CD8-positive, alpha-beta T cell (primary cell): ENCODE measurements at regions of chr5 and their contacts with region 1.

Region 1: DNA sequence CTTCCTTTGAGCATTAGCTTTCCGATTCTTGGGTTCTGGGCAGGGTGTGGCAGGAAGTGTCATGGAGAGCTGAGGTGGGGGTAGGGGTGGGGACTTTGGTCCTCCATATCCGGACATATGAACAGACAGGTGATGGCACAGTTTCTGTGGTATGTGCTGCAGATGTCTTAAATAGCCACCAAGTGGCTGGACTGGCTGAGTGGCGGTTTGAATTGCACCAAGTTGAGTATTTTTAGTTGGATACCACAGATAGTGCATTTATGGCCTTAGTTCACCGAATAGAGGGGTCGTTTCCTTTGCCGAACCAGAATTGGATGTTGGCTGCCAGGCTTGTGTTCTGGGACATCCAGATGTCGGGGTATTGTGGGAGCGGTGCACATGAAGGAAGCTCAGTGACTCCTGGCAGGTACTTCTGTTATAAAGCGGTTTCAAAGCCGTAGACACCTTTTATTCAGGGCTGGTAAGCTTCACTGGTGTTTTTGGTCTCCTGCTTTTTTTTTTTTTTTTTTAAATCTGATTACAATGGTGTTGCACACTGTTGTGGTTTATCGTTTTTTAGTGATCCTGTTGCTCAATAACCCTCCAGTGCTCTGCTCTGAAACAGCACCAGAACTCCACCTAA is 15.1 kb upstream of the TNFAIP8 start:
- DNase-seq: peak in 8 of 9 experiments; percentile 34 to 80 (median 65)
- ATAC-seq: peak; percentile 51
- H3K4me3 ChIP-seq: peak overlapping the region; percentile 18 to 41
- H3K4me3 Mint-ChIP-seq: peak overlapping the region; percentile 75
- H3K27ac ChIP-seq: peak overlapping the region; percentile 8 to 62
- H3K27ac Mint-ChIP-seq: peak overlapping the region; percentile 94
- H3K4me1 ChIP-seq: peaks cover 96% of the 10 kb centered on the region
- H3K4me1 Mint-ChIP-seq: peaks cover 94% of the 10 kb centered on the region
- H3K27me3 ChIP-seq: no peaks in the 10 kb centered on the region
- H3K27me3 Mint-ChIP-seq: no peaks in the 10 kb centered on the region
- CTCF ChIP-seq: no peak

Region 2: DNA sequence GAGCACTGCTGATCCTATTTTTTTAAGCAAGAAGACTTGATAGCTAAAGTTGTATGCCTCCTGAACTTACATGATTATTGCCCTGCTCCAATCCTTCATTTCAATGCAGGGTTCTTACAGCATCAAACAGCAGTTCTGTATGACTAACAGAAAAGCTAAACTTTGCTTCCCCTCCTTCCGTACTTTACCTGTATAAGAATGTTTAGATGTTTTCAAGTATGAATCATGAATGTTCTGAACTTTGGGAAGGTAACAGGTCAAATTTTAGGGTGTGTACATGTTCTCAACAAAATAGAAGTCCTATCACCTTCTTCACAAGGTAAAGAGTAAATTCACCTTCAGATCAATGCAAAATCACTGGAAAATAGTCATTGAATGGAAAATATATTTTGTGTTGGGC is 1793.5 kb before region 1 on chr5:
- CTCF ChIA-PET with region 1: no interaction called
- POLR2A ChIA-PET with region 1: no interaction called
- intact Hi-C with region 1: no loop called
- DNase-seq: no peak
- ATAC-seq: no peak
- H3K4me3 ChIP-seq: no peak overlapping the region
- H3K4me3 Mint-ChIP-seq: no peak overlapping the region
- H3K27ac ChIP-seq: no peak overlapping the region
- H3K27ac Mint-ChIP-seq: no peak overlapping the region
- H3K4me1 ChIP-seq: no peaks in the 10 kb centered on the region
- H3K4me1 Mint-ChIP-seq: no peaks in the 10 kb centered on the region
- H3K27me3 ChIP-seq: no peaks in the 10 kb centered on the region
- H3K27me3 Mint-ChIP-seq: no peaks in the 10 kb centered on the region
- CTCF ChIP-seq: no peak

Region 3: GRCh38 chr5:119274767-119275130 is 66.0 kb before region 1 on chr5:
- CTCF ChIA-PET with region 1: interaction called, 8 read pairs
- POLR2A ChIA-PET with region 1: interaction called, 14 read pairs
- intact Hi-C with region 1: loop called in 1 of 2 experiments (anchors 2 kb)
- DNase-seq: peak in 4 of 9 experiments; percentile 30 to 76 (median 46)
- ATAC-seq: peak; percentile 52
- H3K4me3 ChIP-seq: peak overlapping the region in 1 of 2 experiments; percentile 96
- H3K4me3 Mint-ChIP-seq: peak overlapping the region; percentile 100
- H3K27ac ChIP-seq: peak overlapping the region; percentile 20 to 89
- H3K27ac Mint-ChIP-seq: peak overlapping the region; percentile 97
- H3K4me1 ChIP-seq: peaks cover 85% of the 10 kb centered on the region
- H3K4me1 Mint-ChIP-seq: peaks cover 96% of the 10 kb centered on the region
- H3K27me3 ChIP-seq: no peaks in the 10 kb centered on the region
- H3K27me3 Mint-ChIP-seq: no peaks in the 10 kb centered on the region
- CTCF ChIP-seq: no peak

Region 4: DNA sequence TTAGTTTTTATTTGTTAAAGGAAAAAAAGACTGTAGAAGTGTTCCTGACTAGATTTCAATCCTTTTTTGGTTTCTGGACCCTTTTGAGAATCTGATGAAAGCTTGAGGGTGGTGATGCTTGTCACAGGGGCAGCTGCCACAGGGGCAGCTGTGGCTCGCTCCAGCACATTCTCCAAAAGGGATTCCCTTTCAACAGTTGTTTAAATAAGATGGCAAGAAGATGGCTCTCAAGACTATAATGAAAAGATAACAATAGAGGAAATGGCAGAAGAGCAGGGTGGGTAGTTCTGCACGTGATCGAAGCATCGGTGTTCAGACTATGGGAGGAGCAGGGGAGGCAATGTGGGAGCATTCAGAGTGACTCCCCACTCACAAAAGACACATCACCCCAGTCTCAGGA is 31.4 kb before region 1 on chr5:
- CTCF ChIA-PET with region 1: interaction called, 14 read pairs
- POLR2A ChIA-PET with region 1: interaction called, 32 read pairs
- intact Hi-C with region 1: loop called (anchors 2 to 5 kb)
- DNase-seq: peak in 1 of 9 experiments; percentile 57
- ATAC-seq: peak; percentile 25
- H3K4me3 ChIP-seq: no peak overlapping the region
- H3K4me3 Mint-ChIP-seq: peak overlapping the region; percentile 78
- H3K27ac ChIP-seq: peak overlapping the region; percentile 30 to 67
- H3K27ac Mint-ChIP-seq: peak overlapping the region; percentile 99
- H3K4me1 ChIP-seq: peaks cover 97% of the 10 kb centered on the region
- H3K4me1 Mint-ChIP-seq: peaks cover 96% of the 10 kb centered on the region
- H3K27me3 ChIP-seq: no peaks in the 10 kb centered on the region
- H3K27me3 Mint-ChIP-seq: no peaks in the 10 kb centered on the region
- CTCF ChIP-seq: no peak

Region 5: DNA sequence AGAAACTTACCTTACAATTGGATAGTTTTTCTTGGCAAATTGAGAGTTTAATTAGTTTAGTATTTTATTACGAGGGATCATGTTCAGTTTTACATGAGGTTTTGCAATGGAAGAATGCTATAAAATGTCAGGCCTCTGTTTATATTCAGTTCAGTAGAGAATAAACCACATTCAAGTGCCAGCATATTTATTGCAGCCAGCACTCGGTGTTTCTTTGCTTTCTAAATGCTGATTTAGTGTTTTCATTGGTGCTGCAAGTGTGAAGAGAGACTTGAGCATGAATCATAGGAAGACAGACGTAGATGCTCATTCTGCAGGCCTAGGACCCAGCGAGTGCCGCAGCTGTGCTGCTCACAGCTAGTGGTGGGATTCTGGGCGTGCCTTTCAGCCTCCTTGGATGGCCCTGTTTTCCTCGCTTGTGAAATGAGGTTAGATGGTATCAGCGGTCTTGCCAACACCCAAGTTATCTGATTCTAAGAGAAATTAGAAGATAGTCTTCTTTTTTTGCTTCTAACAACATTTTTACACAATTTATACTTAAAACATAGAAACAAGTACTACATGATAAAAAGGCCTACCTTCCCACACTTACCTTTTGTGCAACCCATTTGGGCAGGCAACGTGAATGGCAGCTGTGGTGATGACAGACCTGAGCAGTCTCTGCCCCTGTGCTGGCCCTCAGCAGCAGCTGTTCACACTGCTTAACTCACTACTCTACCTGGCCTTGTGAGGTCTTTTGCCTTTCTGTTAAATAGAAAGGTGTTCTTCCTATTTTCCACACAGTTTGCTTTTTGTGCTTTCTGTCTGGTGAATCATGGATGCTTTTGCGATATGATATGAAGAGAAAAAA is 11.7 kb before region 1 on chr5:
- CTCF ChIA-PET with region 1: interaction called, 3 read pairs
- POLR2A ChIA-PET with region 1: interaction called, 22 read pairs
- intact Hi-C with region 1: loop called in 1 of 2 experiments (anchors 1 kb)
- DNase-seq: peak in 8 of 9 experiments; percentile 34 to 88 (median 74)
- ATAC-seq: peak; percentile 70
- H3K4me3 ChIP-seq: no peak overlapping the region
- H3K4me3 Mint-ChIP-seq: peak overlapping the region; percentile 47
- H3K27ac ChIP-seq: peak overlapping the region; percentile 39 to 80
- H3K27ac Mint-ChIP-seq: peak overlapping the region; percentile 95
- H3K4me1 ChIP-seq: peaks cover 95% of the 10 kb centered on the region
- H3K4me1 Mint-ChIP-seq: peaks cover 94% of the 10 kb centered on the region
- H3K27me3 ChIP-seq: no peaks in the 10 kb centered on the region
- H3K27me3 Mint-ChIP-seq: no peaks in the 10 kb centered on the region
- CTCF ChIP-seq: no peak

Region 6: GRCh38 chr5:119355685-119356611 is 15.2 kb after region 1 on chr5 and contains the start of gene TNFAIP8:
- CTCF ChIA-PET with region 1: interaction called, 7 read pairs
- POLR2A ChIA-PET with region 1: interaction called, 6 read pairs
- intact Hi-C with region 1: loop called (anchors 2 kb)
- DNase-seq: peak in 6 of 9 experiments; percentile 43 to 76 (median 55)
- ATAC-seq: peak; percentile 37
- H3K4me3 ChIP-seq: peak within 1 kb of the TSS; percentile 38 to 52
- H3K4me3 Mint-ChIP-seq: peak within 1 kb of the TSS; percentile 88
- H3K27ac ChIP-seq: peak within 1 kb of the TSS in 1 of 2 experiments; percentile 62
- H3K27ac Mint-ChIP-seq: peak within 1 kb of the TSS; percentile 95
- H3K4me1 ChIP-seq: peaks cover 84% of the 10 kb centered on the region
- H3K4me1 Mint-ChIP-seq: peaks cover 91% of the 10 kb centered on the region
- H3K27me3 ChIP-seq: no peaks in the 10 kb centered on the region
- H3K27me3 Mint-ChIP-seq: no peaks in the 10 kb centered on the region
- CTCF ChIP-seq: no peak
- total RNA-seq, gene TNFAIP8: 62.3 to 63.0 TPM

Region 7: DNA sequence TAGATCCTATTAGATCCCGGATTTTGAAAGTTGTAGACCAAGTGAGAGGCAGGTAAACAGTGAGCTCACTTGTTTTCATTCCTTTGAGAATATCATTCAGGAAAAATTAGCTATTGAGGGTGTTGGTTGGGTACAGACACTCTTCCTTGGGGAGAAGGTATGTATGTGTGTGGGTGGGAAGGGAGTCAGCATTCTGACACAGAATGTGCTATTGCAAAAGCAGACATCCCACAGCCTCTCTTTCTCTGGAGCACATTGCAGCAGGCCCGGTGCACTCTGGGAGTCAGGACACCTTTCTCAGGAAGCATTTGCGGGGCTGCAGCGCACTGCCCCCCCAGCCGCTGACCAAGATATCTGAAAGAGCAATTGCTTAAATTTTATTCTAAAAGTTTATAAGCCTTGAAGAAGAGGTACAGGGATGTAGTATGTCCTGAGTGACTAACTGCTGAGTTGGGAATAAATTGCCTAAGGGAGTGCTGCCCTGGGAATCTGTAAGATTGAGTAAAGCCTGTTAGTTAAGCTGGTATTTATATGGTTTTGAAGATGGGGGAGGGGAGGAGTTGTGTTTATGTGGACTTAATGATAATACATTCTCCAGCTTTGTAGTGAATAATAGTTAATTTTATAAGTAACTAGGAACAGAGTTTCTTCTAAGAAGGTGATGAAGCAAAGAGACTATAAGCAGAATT is 20.3 kb after region 1 on chr5:
- CTCF ChIA-PET with region 1: interaction called, 7 read pairs
- POLR2A ChIA-PET with region 1: interaction called, 6 read pairs
- intact Hi-C with region 1: loop called in 1 of 2 experiments (anchors 2 kb)
- DNase-seq: no peak
- ATAC-seq: no peak
- H3K4me3 ChIP-seq: no peak overlapping the region
- H3K4me3 Mint-ChIP-seq: peak overlapping the region; percentile 12
- H3K27ac ChIP-seq: peak overlapping the region in 1 of 2 experiments; percentile 48
- H3K27ac Mint-ChIP-seq: peak overlapping the region; percentile 95
- H3K4me1 ChIP-seq: peaks cover 90% of the 10 kb centered on the region
- H3K4me1 Mint-ChIP-seq: peaks cover 91% of the 10 kb centered on the region
- H3K27me3 ChIP-seq: no peaks in the 10 kb centered on the region
- H3K27me3 Mint-ChIP-seq: no peaks in the 10 kb centered on the region
- CTCF ChIP-seq: no peak